Dorsolateral prefrontal cortex (tissue), 120 donors: ENCODE measurements at regions of chr7 and their contacts with region 1.

Region 1: DNA sequence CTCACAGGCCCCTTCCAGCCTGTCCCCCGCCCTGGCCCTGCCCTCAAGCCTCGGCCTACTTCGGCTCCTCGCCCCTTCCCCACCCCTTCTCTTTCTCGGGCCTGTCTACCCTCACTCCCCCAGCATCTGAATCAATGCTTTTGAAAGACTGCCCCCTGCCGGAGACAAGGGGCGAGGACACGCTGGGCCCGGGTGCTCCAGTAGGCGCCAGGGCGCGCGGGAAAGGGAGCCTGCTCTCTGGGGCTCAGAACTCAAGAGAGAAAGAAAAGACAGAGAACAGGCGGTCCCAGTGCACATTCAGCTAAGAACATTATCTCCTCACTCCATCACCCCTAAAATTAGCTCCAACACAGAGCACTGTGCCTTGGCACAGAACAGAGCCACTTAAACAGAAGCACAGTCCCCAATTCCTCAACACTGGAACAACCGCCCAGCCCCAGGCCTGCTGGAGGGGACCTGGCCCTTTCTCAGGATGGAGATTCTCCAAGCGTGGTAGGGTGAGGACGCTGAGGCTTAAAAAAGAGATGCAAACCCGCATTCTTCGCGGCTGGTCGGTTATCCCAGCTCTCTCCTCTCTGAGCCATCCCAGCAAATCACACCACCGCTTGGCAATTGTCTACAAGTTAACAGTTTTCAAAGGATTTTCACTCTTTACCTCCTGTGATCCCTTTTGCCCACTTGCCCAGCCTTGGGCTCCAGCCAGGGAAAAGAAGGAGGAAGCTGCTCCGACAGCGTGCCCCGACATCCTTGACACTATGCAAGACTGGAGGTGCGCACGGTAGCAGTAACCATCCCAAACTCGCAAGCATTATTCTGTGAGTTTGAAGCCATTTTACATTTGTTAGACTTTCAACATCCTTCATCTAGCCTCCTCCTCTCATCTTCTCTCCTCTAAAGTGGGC is 2.1 kb downstream of the GIGYF1 start:
- DNase-seq: peak in 9 of 10 donors; percentile 61 to 85 (median 79)
- H3K4me3 ChIP-seq: peak overlapping the region in 58 of 59 donors; percentile 0 to 96 (median 84)
- H3K27ac ChIP-seq: peak overlapping the region in 53 of 59 donors; percentile 4 to 95 (median 80)
- H3K27me3 ChIP-seq: no peaks in the 10 kb centered on the region
- CTCF ChIP-seq: peak; percentile 36 to 96 (median 88)

Region 2: GRCh38 chr7:100469227-100470044 is 222.5 kb before region 1 on chr7:
- intact Hi-C with region 1: loop called (anchors 1 to 5 kb)
- DNase-seq: peak; percentile 85 to 93 (median 90)
- H3K4me3 ChIP-seq: peak overlapping the region in 2 of 59 donors; percentile 16 to 21
- H3K27ac ChIP-seq: peak overlapping the region in 53 of 59 donors; percentile 31 to 100 (median 97)
- H3K27me3 ChIP-seq: no peaks in the 10 kb centered on the region
- CTCF ChIP-seq: peak; percentile 81 to 99 (median 94)

Region 3: GRCh38 chr7:100586266-100587025 is 105.5 kb before region 1 on chr7 and contains the start of gene FBXO24:
- intact Hi-C with region 1: loop called in 1 of 2 experiments (anchors 5 kb)
- DNase-seq: peak; percentile 99 to 100 (median 100)
- H3K4me3 ChIP-seq: peak within 1 kb of the TSS; percentile 74 to 100 (median 99)
- H3K27ac ChIP-seq: peak within 1 kb of the TSS; percentile 61 to 99 (median 95)
- H3K27me3 ChIP-seq: no peaks in the 10 kb centered on the region
- CTCF ChIP-seq: peak in 5 of 56 donors; percentile 5 to 51 (median 13)
- total RNA-seq, gene FBXO24: 0.23 to 3.2 (median 1.1) TPM in 113 of 120 experiments, not detected in the others

Region 4: GRCh38 chr7:100611974-100612729 is 79.8 kb before region 1 on chr7 and contains the start of gene MOSPD3:
- intact Hi-C with region 1: loop called (anchors 5 kb)
- DNase-seq: peak; percentile 96 to 100 (median 99)
- H3K4me3 ChIP-seq: peak within 1 kb of the TSS; percentile 64 to 96 (median 86)
- H3K27ac ChIP-seq: peak within 1 kb of the TSS in 58 of 59 donors; percentile 49 to 99 (median 94)
- H3K27me3 ChIP-seq: no peaks in the 10 kb centered on the region
- CTCF ChIP-seq: peak in 21 of 56 donors; percentile 2 to 62 (median 22)
- total RNA-seq, gene MOSPD3: 11.7 to 26.4 (median 18.7) TPM

Region 5: GRCh38 chr7:100705753-100706671 is 14.1 kb after region 1 on chr7 and contains the start of gene POP7:
- intact Hi-C with region 1: loop called (anchors 1 kb)
- DNase-seq: peak; percentile 94 to 97 (median 96)
- H3K4me3 ChIP-seq: peak within 1 kb of the TSS; percentile 62 to 100 (median 88)
- H3K27ac ChIP-seq: peak within 1 kb of the TSS; percentile 21 to 98 (median 92)
- H3K27me3 ChIP-seq: no peaks in the 10 kb centered on the region
- CTCF ChIP-seq: peak in 5 of 56 donors; percentile 2 to 31 (median 20)
- total RNA-seq, gene POP7: 20.7 to 61.9 (median 42.4) TPM